ENCODE measurements at regions of chr16 and their contacts with region 1.

Region 1: GRCh38 chr16:57863434-57864160 is 61.3 kb upstream of the KIFC3 start:
- DNase-seq: peak; percentile 47
- ATAC-seq: peak; percentile 94

Region 2: GRCh38 chr16:57757326-57757786 is 106.2 kb before region 1 on chr16:
- intact Hi-C with region 1: loop called (anchors 5 kb)
- DNase-seq: peak; percentile 93
- ATAC-seq: peak; percentile 90

Region 3: GRCh38 chr16:58098207-58099096 is 234.9 kb after region 1 on chr16:
- intact Hi-C with region 1: no loop called
- DNase-seq: no peak
- ATAC-seq: no peak

Measured in left ventricle myocardium superior (tissue), 1 donor.